ENCODE measurements at regions of chr14 and their contacts with region 1.

Region 1: DNA sequence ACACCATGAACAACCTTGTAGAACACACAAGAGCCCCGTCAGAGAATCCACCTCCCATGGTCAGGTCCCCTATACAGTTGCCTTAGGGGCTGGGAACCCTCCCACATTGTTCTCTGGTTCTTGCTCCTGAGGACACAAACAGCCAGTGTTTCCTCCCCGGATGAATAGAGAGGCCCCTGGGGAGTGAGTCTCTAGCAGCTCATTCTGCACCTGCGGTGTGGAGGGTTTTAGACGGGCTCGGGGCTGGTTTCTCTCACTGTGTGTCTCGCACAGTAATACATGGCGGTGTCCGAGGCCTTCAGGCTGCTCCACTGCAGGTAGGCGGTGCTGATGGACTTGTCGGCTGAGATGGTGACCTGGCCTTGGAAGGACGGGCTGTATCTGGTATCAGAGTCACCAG is 1052.1 kb downstream of the TMEM121 start:
- DNase-seq: no peak
- CTCF ChIP-seq: no peak

Region 2: GRCh38 chr14:106556665-106557289 is 21.7 kb before region 1 on chr14:
- CTCF ChIA-PET with region 1: interaction called, 24 read pairs
- POLR2A ChIA-PET with region 1: no interaction called
- DNase-seq: peak; percentile 45
- CTCF ChIP-seq: peak; percentile 98

Measured in GM10248 (cell line).